ENCODE measurements at regions of chr18 and their contacts with region 1.

Region 1: DNA sequence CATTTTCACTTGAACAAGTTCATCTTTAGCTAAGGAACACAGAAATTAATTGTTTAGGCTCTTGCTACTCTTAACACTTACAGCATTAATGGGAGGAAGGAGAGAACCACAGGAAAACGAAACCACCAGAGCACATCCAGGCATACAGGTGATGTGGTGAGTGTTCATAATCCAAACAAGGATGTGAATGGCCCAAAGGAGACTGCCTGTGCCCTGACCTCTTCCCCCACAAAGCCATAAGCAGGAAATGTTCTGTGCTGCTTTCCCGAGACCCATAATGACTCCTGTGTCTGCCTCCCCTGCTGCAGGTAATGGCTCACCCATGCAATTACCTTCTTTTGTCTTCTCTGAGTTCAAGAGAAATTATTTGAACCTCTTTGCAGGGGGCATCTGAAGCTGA is 295.9 kb upstream of the LINC00305 start:
- DNase-seq: no peak
- ATAC-seq: no peak
- H3K4me3 ChIP-seq: no peak overlapping the region
- H3K27ac ChIP-seq: no peak overlapping the region
- H3K4me1 ChIP-seq: no peaks in the 10 kb centered on the region
- H3K27me3 ChIP-seq: no peaks in the 10 kb centered on the region
- CTCF ChIP-seq: no peak

Region 2: GRCh38 chr18:64175432-64175831 is 269.4 kb before region 1 on chr18:
- intact Hi-C with region 1: no loop called
- DNase-seq: no peak
- ATAC-seq: no peak
- H3K4me3 ChIP-seq: no peak overlapping the region
- H3K27ac ChIP-seq: no peak overlapping the region
- H3K4me1 ChIP-seq: no peaks in the 10 kb centered on the region
- H3K27me3 ChIP-seq: no peaks in the 10 kb centered on the region
- CTCF ChIP-seq: no peak

Region 3: DNA sequence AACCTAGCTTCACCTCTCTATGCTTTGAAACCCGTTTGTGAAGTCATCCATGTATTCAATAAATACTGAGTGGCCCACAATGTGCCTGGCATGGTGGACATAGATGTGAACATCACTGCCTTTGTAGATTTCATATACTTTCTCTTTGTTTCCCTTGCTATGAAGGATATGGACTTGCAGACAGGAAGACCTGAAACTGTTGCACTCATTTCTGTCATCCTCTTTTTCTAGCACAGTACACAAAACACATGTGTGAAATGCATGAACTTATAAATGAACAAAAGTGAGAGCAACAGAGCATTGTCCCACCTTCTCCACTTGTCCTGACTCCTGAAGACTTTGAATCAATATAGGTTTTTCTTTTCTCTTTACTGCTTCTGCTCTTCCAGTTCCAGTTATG is 46.5 kb before region 1 on chr18:
- intact Hi-C with region 1: no loop called
- DNase-seq: no peak
- ATAC-seq: no peak
- H3K4me3 ChIP-seq: no peak overlapping the region
- H3K27ac ChIP-seq: no peak overlapping the region
- H3K4me1 ChIP-seq: no peaks in the 10 kb centered on the region
- H3K27me3 ChIP-seq: no peaks in the 10 kb centered on the region
- CTCF ChIP-seq: no peak

Region 4: GRCh38 chr18:65380986-65381385 is 936.2 kb after region 1 on chr18:
- intact Hi-C with region 1: loop called in 1 of 10 experiments (anchors 5 kb)
- DNase-seq: no peak
- ATAC-seq: no peak
- H3K4me3 ChIP-seq: no peak overlapping the region
- H3K27ac ChIP-seq: no peak overlapping the region
- H3K4me1 ChIP-seq: no peaks in the 10 kb centered on the region
- H3K27me3 ChIP-seq: no peaks in the 10 kb centered on the region
- CTCF ChIP-seq: no peak

Region 5: GRCh38 chr18:66138642-66139041 is 1693.8 kb after region 1 on chr18:
- intact Hi-C with region 1: no loop called
- DNase-seq: peak in 1 of 2 donors; percentile 16
- ATAC-seq: peak in 7 of 8 donors; percentile 50 to 86 (median 80)
- H3K4me3 ChIP-seq: no peak overlapping the region
- H3K27ac ChIP-seq: peak overlapping the region in 5 of 10 donors; percentile 23 to 68 (median 59)
- H3K4me1 ChIP-seq: peaks cover 0 to 18% (median 0%) of the 10 kb centered on the region in 9 donors
- H3K27me3 ChIP-seq: no peaks in the 10 kb centered on the region
- CTCF ChIP-seq: no peak

Measured in heart right ventricle (tissue), 16 donors.